IMR-90 (cell line): ENCODE measurements at regions of chr5 and their contacts with region 1.

Region 1: DNA sequence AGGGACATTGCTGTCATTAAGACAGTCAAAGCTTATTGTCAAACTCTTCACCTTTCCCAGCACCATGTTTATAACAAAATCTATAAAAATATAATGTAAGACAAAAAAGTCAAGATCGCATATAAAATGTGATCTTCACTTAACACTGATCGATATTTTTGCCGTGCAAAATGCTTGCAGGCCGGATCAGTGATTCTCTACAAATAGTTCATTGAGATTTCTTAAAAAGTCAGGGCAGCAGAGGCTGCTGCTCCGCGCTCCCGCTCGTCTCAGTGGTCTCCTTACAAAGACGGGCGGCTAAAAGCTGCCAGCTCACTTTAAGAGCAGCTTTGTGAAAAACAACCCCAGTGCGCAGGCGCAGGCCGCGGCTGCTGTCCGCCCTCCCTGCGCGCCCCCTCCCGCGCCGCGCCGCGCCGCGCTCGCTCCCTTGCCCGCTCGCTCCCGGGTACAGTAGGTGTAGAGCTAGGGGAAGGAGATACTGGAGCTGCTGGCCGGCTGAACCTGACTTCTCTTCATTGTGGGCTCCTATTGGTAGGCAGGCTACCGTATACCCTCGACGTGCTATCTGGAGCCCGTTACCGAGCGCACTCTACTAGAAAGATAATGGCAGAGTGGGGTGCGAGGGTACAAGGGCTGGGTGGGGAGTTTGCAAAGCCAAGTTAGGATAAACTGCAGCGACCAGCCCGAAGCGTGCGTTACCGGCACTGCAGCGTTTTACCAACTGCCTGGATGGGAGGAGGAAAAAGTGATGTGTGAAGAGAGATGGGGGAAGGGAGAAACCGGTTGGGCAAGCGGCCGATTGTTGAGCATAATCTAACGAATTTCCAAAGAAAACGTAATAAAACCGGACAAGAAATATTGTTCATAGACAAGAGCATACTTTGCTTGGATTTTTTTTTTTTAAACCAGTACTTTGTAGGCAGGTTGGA is at the start of gene ARRDC3:
- DNase-seq: peak; percentile 94
- ATAC-seq: peak; percentile 63
- H3K4me3 ChIP-seq: peak within 1 kb of the TSS; percentile 71
- H3K27ac ChIP-seq: peak within 1 kb of the TSS; percentile 84
- H3K4me1 ChIP-seq: no peaks in the 10 kb centered on the region
- H3K27me3 ChIP-seq: no peaks in the 10 kb centered on the region
- CTCF ChIP-seq: no peak
- POLR2A ChIP-seq: peak; percentile 100
- RAD21 ChIP-seq: no peak
- total RNA-seq, gene ARRDC3: 82.2 and 86.7 TPM in 2 replicates

Region 2: GRCh38 chr5:90866333-90866732 is 517.0 kb before region 1 on chr5:
- CTCF ChIA-PET with region 1: interaction called, 3 read pairs
- POLR2A ChIA-PET with region 1: no interaction called
- dilution Hi-C with region 1: no loop called
- in situ Hi-C with region 1: no loop called
- intact Hi-C with region 1: loop called (anchors 1 kb)
- DNase-seq: peak; percentile 28
- ATAC-seq: peak; percentile 70
- H3K4me3 ChIP-seq: no peak overlapping the region
- H3K27ac ChIP-seq: no peak overlapping the region
- H3K4me1 ChIP-seq: no peaks in the 10 kb centered on the region; the same call in 1 of the 2 replicates
- H3K27me3 ChIP-seq: no peaks in the 10 kb centered on the region
- CTCF ChIP-seq: peak; percentile 60
- POLR2A ChIP-seq: no peak
- RAD21 ChIP-seq: peak; percentile 54

Region 3: DNA sequence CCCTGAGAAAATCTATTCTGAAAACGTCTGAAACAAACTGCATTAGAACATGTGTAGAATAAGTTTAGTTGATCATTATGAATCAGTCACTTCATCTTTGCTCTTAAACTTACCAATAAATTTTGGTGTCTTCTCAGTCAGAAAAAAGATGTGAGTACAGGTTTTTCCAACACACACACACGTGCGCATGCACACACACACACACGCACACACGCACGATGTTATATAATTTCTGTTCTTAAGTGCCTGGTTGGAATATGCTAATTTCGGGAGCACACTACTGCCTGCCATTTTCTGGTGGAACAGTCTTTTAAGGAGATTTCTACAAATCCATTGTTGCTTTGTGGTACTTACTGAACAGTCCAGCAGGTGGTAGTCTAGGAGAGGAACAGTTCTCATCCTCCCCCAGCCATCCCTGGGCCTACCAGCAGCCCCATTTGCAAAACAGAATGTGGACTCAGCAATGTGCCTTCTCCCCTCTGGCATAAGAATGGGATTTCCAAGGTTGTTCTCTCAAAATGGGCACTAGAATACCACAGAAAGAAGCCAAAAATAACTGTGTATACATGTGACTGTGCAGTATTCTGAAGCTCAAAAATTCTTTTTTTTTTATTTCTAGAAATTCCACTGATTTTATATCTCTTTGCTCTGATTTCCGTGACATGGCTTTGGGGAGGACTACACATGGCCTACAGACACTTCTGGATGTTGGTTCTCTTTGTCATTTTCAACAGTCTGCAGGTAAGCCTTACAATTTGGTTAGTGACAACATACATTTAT is 281.5 kb before region 1 on chr5:
- CTCF ChIA-PET with region 1: interaction called, 20 read pairs
- POLR2A ChIA-PET with region 1: interaction called, 5 read pairs
- dilution Hi-C with region 1: no loop called
- in situ Hi-C with region 1: loop called (anchors 5 kb)
- intact Hi-C with region 1: loop called (anchors 1 kb)
- DNase-seq: peak; percentile 84
- ATAC-seq: peak; percentile 100
- H3K4me3 ChIP-seq: no peak overlapping the region
- H3K27ac ChIP-seq: no peak overlapping the region
- H3K4me1 ChIP-seq: no peaks in the 10 kb centered on the region
- H3K27me3 ChIP-seq: no peaks in the 10 kb centered on the region
- CTCF ChIP-seq: peak; percentile 91
- POLR2A ChIP-seq: 0 out of 2 replicates have a peak, but pooled peaks have one; percentile 50
- RAD21 ChIP-seq: peak; percentile 98

Region 4: DNA sequence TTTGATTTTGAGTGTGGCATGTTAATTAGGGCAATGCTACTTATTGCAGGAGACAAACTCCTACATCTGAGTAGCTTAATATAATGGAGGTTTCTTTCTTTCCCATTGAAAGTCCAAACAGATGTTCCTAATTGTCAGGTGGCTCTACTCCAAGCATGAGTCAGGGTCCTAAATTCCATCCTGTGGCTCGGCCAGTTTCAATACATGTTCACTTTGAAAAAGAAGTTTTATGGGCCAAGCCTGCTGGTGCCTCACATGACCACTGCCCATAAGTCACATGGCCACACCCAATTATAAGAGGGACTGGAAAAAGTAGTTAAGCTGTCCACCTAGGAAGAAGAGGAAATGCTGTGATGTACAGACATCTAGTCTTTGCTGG is 170.6 kb before region 1 on chr5:
- CTCF ChIA-PET with region 1: interaction called, 3 read pairs
- POLR2A ChIA-PET with region 1: no interaction called
- dilution Hi-C with region 1: no loop called
- in situ Hi-C with region 1: no loop called
- intact Hi-C with region 1: loop called (anchors 5 kb)
- DNase-seq: peak; percentile 94
- ATAC-seq: peak; percentile 82
- H3K4me3 ChIP-seq: no peak overlapping the region
- H3K27ac ChIP-seq: peak overlapping the region; percentile 65; the same call in 1 of the 2 replicates
- H3K4me1 ChIP-seq: peaks cover 5% of the 10 kb centered on the region
- H3K27me3 ChIP-seq: no peaks in the 10 kb centered on the region
- CTCF ChIP-seq: no peak
- POLR2A ChIP-seq: no peak
- RAD21 ChIP-seq: no peak

Region 5: DNA sequence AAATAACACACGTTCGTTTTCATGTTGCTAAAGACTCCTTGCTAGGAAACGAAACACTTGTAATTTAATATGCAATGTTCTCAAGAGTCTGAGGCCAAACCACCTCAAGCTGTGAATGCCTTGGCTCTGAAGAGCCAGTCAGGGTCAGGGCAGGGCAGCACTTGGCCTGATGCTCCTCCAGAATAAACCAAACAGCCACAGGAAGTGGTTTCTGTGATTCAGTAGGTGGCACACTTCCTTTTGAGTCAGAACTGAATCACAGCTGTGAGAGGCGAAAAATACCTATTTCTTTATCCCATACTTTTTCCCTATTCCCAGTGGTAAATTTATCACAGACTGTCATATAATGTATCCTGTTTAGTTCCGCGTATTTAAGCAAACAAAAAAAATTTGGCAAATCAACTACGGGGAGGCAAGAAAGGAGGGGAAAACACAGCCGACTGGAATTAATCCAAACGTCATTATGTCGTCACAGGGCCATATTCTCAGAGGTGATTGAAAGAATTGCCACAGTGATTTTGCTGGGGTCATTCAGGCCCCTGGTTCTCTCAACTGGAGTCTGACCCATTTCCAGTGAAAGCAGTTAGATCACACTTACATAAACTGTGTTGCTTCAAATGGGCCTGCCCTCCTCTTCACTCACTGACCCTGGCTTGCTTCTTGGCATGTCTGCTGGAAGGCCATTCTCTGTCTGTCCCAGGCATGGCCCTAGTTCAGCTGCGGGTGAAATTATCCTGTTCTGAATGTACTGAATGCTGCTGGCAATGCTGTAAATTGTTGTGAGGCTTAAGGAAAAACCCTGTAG is 71.4 kb before region 1 on chr5:
- CTCF ChIA-PET with region 1: interaction called, 6 read pairs
- POLR2A ChIA-PET with region 1: no interaction called
- dilution Hi-C with region 1: no loop called
- in situ Hi-C with region 1: no loop called
- intact Hi-C with region 1: loop called (anchors 1 kb)
- DNase-seq: peak; percentile 99
- ATAC-seq: peak; percentile 91
- H3K4me3 ChIP-seq: no peak overlapping the region
- H3K27ac ChIP-seq: peak overlapping the region; percentile 94
- H3K4me1 ChIP-seq: peaks cover 18% of the 10 kb centered on the region
- H3K27me3 ChIP-seq: no peaks in the 10 kb centered on the region
- CTCF ChIP-seq: no peak
- POLR2A ChIP-seq: no peak; the same call in 1 of the 2 replicates
- RAD21 ChIP-seq: 0 out of 2 replicates have a peak, but pooled peaks have one; percentile 20

Region 6: GRCh38 chr5:91419571-91420537 is 36.6 kb after region 1 on chr5:
- CTCF ChIA-PET with region 1: interaction called, 25 read pairs
- POLR2A ChIA-PET with region 1: no interaction called
- dilution Hi-C with region 1: no loop called
- in situ Hi-C with region 1: no loop called
- intact Hi-C with region 1: loop called (anchors 5 kb)
- DNase-seq: peak; percentile 55
- ATAC-seq: peak; percentile 50
- H3K4me3 ChIP-seq: no peak overlapping the region
- H3K27ac ChIP-seq: no peak overlapping the region
- H3K4me1 ChIP-seq: no peaks in the 10 kb centered on the region
- H3K27me3 ChIP-seq: no peaks in the 10 kb centered on the region
- CTCF ChIP-seq: peak; percentile 73
- POLR2A ChIP-seq: no peak
- RAD21 ChIP-seq: peak; percentile 76